ENCODE measurements at regions of chr12 and their contacts with region 1.

Region 1: GRCh38 chr12:66235626-66236281 is 46.7 kb downstream of the IRAK3 start:
- DNase-seq: no peak
- H3K4me3 ChIP-seq: peak overlapping the region; percentile 49
- H3K27ac ChIP-seq: no peak overlapping the region
- H3K27me3 ChIP-seq: no peaks in the 10 kb centered on the region
- CTCF ChIP-seq: peak; percentile 26; the same call in 1 of the 2 replicates

Region 2: GRCh38 chr12:66269757-66270383 is 34.1 kb after region 1 on chr12:
- CTCF ChIA-PET with region 1: interaction called, 13 read pairs
- POLR2A ChIA-PET with region 1: no interaction called
- DNase-seq: peak; percentile 20
- H3K4me3 ChIP-seq: no peak overlapping the region
- H3K27ac ChIP-seq: no peak overlapping the region
- H3K27me3 ChIP-seq: peaks cover 13% of the 10 kb centered on the region
- CTCF ChIP-seq: peak; percentile 80

Region 3: DNA sequence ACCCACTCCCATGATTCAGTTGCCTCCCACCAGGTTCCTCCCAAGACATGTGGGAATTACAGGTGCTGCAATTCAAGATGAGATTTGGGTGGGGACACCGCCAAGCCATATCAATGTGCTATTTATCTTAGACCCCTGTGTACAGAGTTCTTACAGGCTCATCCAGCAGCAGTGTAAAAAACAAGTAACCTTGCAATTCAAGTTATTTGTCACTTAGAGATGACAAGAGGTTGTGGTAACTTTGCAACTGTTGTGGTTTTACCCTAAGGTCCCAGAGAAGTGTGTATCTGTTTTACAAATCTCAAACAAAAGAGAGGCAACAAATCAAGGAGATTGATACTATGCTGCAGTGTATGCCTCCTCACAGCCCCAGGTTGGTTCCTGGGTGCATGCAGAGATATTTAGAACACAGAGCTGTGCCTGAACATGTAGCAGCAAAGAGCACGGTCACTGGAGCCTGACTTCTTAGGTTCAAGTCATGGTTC is 55.0 kb after region 1 on chr12:
- CTCF ChIA-PET with region 1: no interaction called
- POLR2A ChIA-PET with region 1: interaction called, 10 read pairs
- DNase-seq: no peak
- H3K4me3 ChIP-seq: no peak overlapping the region
- H3K27ac ChIP-seq: no peak overlapping the region
- H3K27me3 ChIP-seq: no peaks in the 10 kb centered on the region
- CTCF ChIP-seq: no peak